ENCODE measurements at regions of chr1 and their contacts with region 1.

Region 1: GRCh38 chr1:70221241-70222121 is at the start of gene SRSF11:
- DNase-seq: peak; percentile 98
- H3K4me3 ChIP-seq: peak within 1 kb of the TSS; percentile 89
- H3K27ac ChIP-seq: peak within 1 kb of the TSS; percentile 98
- H3K4me1 ChIP-seq: peaks cover 19% of the 10 kb centered on the region
- H3K27me3 ChIP-seq: no peaks in the 10 kb centered on the region
- CTCF ChIP-seq: peak; percentile 29; the same call in 1 of the 2 replicates
- total RNA-seq, gene SRSF11: 217 and 224 TPM in 2 replicates

Region 2: GRCh38 chr1:70143048-70143659 is 78.3 kb before region 1 on chr1:
- CTCF ChIA-PET with region 1: interaction called, 12 read pairs
- POLR2A ChIA-PET with region 1: no interaction called
- intact Hi-C with region 1: no loop called
- DNase-seq: no peak
- H3K4me3 ChIP-seq: no peak overlapping the region
- H3K27ac ChIP-seq: no peak overlapping the region
- H3K4me1 ChIP-seq: no peaks in the 10 kb centered on the region
- H3K27me3 ChIP-seq: no peaks in the 10 kb centered on the region
- CTCF ChIP-seq: peak; percentile 28; the same call in 1 of the 2 replicates

Region 3: GRCh38 chr1:70290218-70290617 is 68.7 kb after region 1 on chr1:
- CTCF ChIA-PET with region 1: no interaction called
- POLR2A ChIA-PET with region 1: no interaction called
- intact Hi-C with region 1: no loop called
- DNase-seq: no peak
- H3K4me3 ChIP-seq: no peak overlapping the region
- H3K27ac ChIP-seq: no peak overlapping the region
- H3K4me1 ChIP-seq: no peaks in the 10 kb centered on the region
- H3K27me3 ChIP-seq: no peaks in the 10 kb centered on the region
- CTCF ChIP-seq: no peak

Measured in A673 (cell line).